ENCODE measurements at regions of chr12 and their contacts with region 1.

Region 1: GRCh38 chr12:1644534-1645438 is 15.8 kb downstream of the WNT5B start:
- DNase-seq: no peak
- ATAC-seq: no peak
- H3K4me3 ChIP-seq: no peak overlapping the region
- H3K27ac ChIP-seq: no peak overlapping the region
- H3K4me1 ChIP-seq: peaks cover 0 to 4% of the 10 kb centered on the region in 2 experiments; a peak in 1 of 4 replicates
- H3K27me3 ChIP-seq: peaks cover 10% of the 10 kb centered on the region; the same call in 1 of the 2 replicates
- CTCF ChIP-seq: no peak
- POLR2A ChIP-seq: no peak
- RAD21 ChIP-seq: no peak

Region 2: DNA sequence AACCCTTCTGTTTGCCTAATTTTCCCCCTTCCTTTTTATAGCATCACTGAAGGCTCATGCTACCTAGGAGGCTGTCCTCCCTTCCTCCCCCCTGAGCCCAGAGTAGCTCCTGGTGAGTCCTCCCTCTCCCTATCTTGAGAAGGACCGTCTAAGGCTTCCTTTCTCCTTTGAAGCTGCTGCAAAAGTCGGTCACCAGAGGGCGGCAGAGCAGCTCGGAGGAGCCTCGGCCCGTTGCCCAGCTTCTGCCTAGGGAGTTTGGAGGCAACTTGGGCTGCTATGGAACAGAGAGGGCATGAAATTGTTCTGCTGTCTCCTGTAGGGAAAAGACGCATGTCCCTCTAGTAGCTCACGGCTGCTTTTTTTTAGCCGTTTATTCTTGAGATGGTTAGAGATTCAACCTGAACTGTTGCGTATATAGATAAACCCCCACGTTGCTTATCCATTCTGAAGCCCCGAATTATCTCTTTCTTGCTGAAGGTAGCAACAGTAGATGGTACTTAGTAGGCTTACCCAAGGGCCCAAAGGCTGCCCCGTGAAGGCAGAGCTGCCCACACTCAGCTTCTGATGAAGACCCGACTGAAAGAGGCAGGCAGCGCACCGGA is 10.1 kb before region 1 on chr12:
- CTCF ChIA-PET with region 1: interaction called, 13 read pairs
- POLR2A ChIA-PET with region 1: no interaction called
- RAD21 ChIA-PET with region 1: no interaction called
- intact Hi-C with region 1: no loop called
- DNase-seq: peak; percentile 63
- ATAC-seq: peak; percentile 81
- H3K4me3 ChIP-seq: no peak overlapping the region
- H3K27ac ChIP-seq: no peak overlapping the region
- H3K4me1 ChIP-seq: peaks cover 0 to 15% of the 10 kb centered on the region in 2 experiments; a peak in 3 of 4 replicates
- H3K27me3 ChIP-seq: no peaks in the 10 kb centered on the region
- CTCF ChIP-seq: peak; percentile 78 to 93 (median 90)
- POLR2A ChIP-seq: no peak
- RAD21 ChIP-seq: peak; percentile 85

Region 3: GRCh38 chr12:1661553-1662335 is 17.0 kb after region 1 on chr12:
- CTCF ChIA-PET with region 1: no interaction called
- POLR2A ChIA-PET with region 1: no interaction called
- RAD21 ChIA-PET with region 1: no interaction called
- intact Hi-C with region 1: no loop called
- DNase-seq: peak; percentile 89
- ATAC-seq: peak; percentile 91
- H3K4me3 ChIP-seq: peak overlapping the region in 1 of 2 experiments; percentile 11; a peak in 1 of 4 replicates
- H3K27ac ChIP-seq: peak overlapping the region; percentile 46; the same call in 1 of the 2 replicates
- H3K4me1 ChIP-seq: peaks cover 0 to 28% of the 10 kb centered on the region in 2 experiments; a peak in 2 of 4 replicates
- H3K27me3 ChIP-seq: no peaks in the 10 kb centered on the region
- CTCF ChIP-seq: no peak
- POLR2A ChIP-seq: peak; percentile 61
- RAD21 ChIP-seq: no peak

Measured in HCT116 (cell line).